ENCODE measurements at regions of chrX and their contacts with region 1.

Region 1: GRCh38 chrX:13087322-13088155 is 43.1 kb upstream of the FAM9C start:
- DNase-seq: peak; percentile 81
- ATAC-seq: peak; percentile 60
- H3K4me3 Mint-ChIP-seq: peak overlapping the region; percentile 79
- H3K27ac Mint-ChIP-seq: peak overlapping the region; percentile 98
- H3K4me1 Mint-ChIP-seq: peaks cover 94% of the 10 kb centered on the region
- H3K27me3 Mint-ChIP-seq: no peaks in the 10 kb centered on the region

Region 2: GRCh38 chrX:12974796-12975669 is 112.5 kb before region 1 on chrX and contains the start of gene TMSB4X:
- CTCF ChIA-PET with region 1: interaction called, 55 read pairs
- POLR2A ChIA-PET with region 1: interaction called, 779 read pairs
- DNase-seq: peak; percentile 90
- ATAC-seq: peak; percentile 61
- H3K4me3 Mint-ChIP-seq: peak within 1 kb of the TSS; percentile 95
- H3K27ac Mint-ChIP-seq: peak within 1 kb of the TSS; percentile 99
- H3K4me1 Mint-ChIP-seq: peaks cover 30% of the 10 kb centered on the region
- H3K27me3 Mint-ChIP-seq: no peaks in the 10 kb centered on the region
- total RNA-seq, gene TMSB4X: 8,800 to 8,961 TPM

Region 3: DNA sequence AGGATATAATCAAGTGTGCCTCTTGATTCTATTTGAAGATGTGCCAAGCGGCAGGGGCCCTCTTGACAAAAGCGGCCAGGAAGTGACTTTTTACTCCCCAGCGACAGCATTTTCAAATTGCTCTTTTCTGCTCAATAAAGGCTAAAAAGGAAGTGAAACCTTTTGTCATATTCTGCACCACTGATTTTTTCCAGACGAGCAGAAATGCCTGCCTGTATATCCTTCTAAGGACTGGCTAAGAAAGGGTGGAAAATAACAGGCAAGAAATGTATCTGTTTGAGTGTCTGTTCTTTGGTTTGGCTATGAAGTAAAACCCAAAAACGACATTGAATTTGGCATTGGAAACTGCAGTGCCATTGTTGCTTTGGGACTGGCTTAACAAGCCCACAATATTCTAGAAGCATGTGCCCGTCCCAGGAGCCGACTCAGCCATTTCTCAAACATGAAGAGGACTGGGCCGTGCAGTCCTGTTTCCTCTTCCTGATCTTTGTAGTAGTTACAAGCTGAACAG is 87.2 kb before region 1 on chrX:
- CTCF ChIA-PET with region 1: interaction called, 40 read pairs
- POLR2A ChIA-PET with region 1: interaction called, 37 read pairs
- DNase-seq: peak; percentile 58
- ATAC-seq: peak; percentile 59
- H3K4me3 Mint-ChIP-seq: peak overlapping the region; percentile 68
- H3K27ac Mint-ChIP-seq: peak overlapping the region; percentile 96
- H3K4me1 Mint-ChIP-seq: peaks cover 66% of the 10 kb centered on the region
- H3K27me3 Mint-ChIP-seq: no peaks in the 10 kb centered on the region

Region 4: DNA sequence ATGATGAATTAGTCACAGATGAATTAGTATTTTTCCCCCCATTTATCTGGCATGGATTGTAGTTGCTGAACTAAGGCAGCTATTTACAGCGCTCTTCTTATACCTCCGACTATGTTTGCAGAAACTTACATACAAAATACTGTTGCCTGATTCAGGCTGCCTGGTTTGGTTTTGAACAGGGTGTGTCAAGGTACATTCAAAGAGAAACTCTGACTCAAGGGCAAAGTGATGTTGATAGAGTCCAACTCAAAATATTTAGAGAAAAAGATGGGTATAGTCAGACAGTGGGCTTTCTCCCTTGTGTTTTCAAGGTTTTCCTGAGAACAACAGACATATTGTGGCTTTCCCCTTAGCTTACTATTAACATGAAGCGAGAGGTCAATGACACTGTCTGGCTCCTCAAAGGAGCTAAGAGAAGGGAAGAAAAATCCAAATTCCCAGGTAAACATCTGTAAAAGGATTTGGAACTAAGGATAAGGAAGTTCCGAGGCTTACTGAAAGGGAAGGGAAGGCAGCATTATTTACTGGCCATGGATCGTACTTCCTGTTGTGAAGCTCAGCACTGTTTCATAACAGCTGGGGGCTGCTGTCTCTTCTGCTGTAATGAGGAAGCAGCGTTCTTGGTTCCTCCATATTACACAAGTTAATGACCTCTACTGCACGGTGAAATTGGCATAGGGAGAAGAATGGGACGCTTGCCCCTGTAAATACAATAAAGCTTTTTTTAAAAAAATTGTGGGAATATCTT is 74.0 kb before region 1 on chrX:
- CTCF ChIA-PET with region 1: interaction called, 11 read pairs
- POLR2A ChIA-PET with region 1: interaction called, 11 read pairs
- DNase-seq: no peak
- ATAC-seq: peak; percentile 71
- H3K4me3 Mint-ChIP-seq: peak overlapping the region; percentile 30
- H3K27ac Mint-ChIP-seq: peak overlapping the region; percentile 75
- H3K4me1 Mint-ChIP-seq: peaks cover 50% of the 10 kb centered on the region
- H3K27me3 Mint-ChIP-seq: no peaks in the 10 kb centered on the region

Region 5: GRCh38 chrX:13074297-13075262 is 13.0 kb before region 1 on chrX:
- CTCF ChIA-PET with region 1: interaction called, 5 read pairs
- POLR2A ChIA-PET with region 1: interaction called, 73 read pairs
- DNase-seq: no peak
- ATAC-seq: peak; percentile 72
- H3K4me3 Mint-ChIP-seq: peak overlapping the region; percentile 12
- H3K27ac Mint-ChIP-seq: peak overlapping the region; percentile 80
- H3K4me1 Mint-ChIP-seq: peaks cover 56% of the 10 kb centered on the region
- H3K27me3 Mint-ChIP-seq: no peaks in the 10 kb centered on the region